ENCODE measurements at regions of chr10 and their contacts with region 1.

Region 1: GRCh38 chr10:60444494-60445064 is 54.9 kb upstream of the ANK3 start:
- DNase-seq: no peak
- H3K4me3 ChIP-seq: no peak overlapping the region
- H3K27ac ChIP-seq: no peak overlapping the region
- H3K4me1 ChIP-seq: peaks cover 0 to 11% (median 0%) of the 10 kb centered on the region in 4 donors
- H3K27me3 ChIP-seq: no peaks in the 10 kb centered on the region
- CTCF ChIP-seq: peak; percentile 45 to 56 (median 50)
- EP300 ChIP-seq: no peak
- POLR2A ChIP-seq: no peak

Region 2: DNA sequence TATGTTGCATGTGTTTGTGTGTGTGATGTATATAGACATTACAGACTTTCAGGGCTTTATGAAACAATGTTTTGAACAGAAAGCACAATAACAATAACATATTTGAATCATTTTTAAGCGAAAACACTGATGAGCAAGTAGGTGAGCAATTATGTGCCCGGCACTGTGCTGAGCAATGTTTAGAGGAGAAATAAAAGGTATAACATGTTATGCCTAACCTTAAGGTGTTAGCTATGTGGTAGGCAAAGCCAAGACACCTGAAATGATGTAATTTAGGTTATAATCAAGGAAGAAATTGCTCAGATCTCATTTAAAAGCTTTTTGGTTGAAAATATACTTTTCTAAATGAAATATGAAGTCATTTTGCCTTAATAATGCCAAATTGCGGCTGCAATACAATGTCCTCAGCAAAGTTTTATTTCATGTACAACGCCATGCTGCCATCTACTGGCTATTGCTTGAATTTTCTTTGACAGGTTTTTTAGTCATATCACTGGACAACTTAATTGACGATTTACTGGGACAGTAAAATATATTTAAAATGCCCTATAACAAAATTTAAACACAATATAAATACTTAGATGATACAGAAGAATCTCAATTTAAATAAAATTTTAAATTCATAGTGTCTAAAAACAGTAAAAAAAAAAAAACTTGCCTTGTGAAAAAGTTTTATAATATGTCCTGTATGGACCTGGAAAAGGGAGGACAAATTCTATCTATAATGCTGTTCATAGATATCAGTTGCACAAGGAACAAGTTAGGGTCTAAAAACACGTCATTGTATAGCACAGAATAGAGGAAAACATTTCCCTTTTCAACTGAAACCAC is 202.6 kb after region 1 on chr10:
- in situ Hi-C with region 1: loop called in 2 of 4 experiments (anchors 10 kb)
- intact Hi-C with region 1: loop called (anchors 5 kb)
- DNase-seq: peak; percentile 22
- H3K4me3 ChIP-seq: no peak overlapping the region
- H3K27ac ChIP-seq: no peak overlapping the region
- H3K4me1 ChIP-seq: no peaks in the 10 kb centered on the region
- H3K27me3 ChIP-seq: no peaks in the 10 kb centered on the region
- CTCF ChIP-seq: peak; percentile 70 to 81 (median 79)
- EP300 ChIP-seq: no peak
- POLR2A ChIP-seq: no peak

Region 3: DNA sequence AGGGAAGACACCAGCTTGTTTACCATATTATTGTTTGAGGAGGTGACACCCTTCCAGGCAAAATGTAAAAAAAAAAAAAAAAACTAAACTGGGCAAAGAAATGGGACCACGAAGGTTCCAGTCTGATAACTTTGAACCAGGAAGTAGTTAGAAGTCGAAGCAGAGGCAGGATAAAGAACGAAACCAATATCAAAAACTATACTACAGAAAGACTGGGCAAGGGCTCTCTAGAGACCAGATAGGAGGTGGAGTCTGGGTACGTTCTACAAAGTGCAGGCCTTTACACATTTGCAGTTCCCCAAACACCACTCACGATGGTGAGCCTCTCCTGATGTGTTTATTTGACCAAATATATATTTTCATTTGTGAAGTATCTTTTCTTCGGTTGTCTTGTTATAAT is 208.0 kb after region 1 on chr10:
- in situ Hi-C with region 1: loop called in 2 of 4 experiments (anchors 10 kb)
- intact Hi-C with region 1: loop called (anchors 5 kb)
- DNase-seq: no peak
- H3K4me3 ChIP-seq: no peak overlapping the region
- H3K27ac ChIP-seq: no peak overlapping the region
- H3K4me1 ChIP-seq: no peaks in the 10 kb centered on the region
- H3K27me3 ChIP-seq: no peaks in the 10 kb centered on the region
- CTCF ChIP-seq: no peak
- EP300 ChIP-seq: no peak
- POLR2A ChIP-seq: no peak

Measured in transverse colon (tissue), 4 donors.